ENCODE measurements at regions of chr9 and their contacts with region 1.

Region 1: DNA sequence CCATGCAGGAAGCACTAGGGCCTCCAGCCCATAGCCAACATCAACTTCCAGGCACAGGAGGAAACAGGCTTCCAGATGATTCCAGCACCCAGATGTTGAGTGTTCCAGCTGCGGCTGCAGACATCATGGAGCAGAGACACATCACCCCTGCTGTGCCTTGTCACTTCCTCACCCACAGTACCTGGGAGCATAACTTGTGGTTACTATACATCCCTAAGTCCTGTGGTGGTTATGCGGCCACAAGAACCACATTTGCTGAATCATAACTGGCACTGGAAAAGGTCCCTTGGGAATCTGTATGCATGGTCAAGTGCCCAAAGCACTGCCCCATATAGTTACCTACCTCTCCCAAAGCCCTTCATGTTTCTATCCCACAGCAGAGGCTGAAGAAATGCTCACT is 56.6 kb downstream of the WHRN start:
- DNase-seq: no peak
- H3K27ac ChIP-seq: no peak overlapping the region
- CTCF ChIP-seq: no peak

Region 2: GRCh38 chr9:113957821-113958341 is 490.8 kb before region 1 on chr9:
- CTCF ChIA-PET with region 1: no interaction called
- POLR2A ChIA-PET with region 1: no interaction called
- DNase-seq: peak; percentile 98
- H3K27ac ChIP-seq: peak overlapping the region; percentile 94
- CTCF ChIP-seq: no peak

Region 3: DNA sequence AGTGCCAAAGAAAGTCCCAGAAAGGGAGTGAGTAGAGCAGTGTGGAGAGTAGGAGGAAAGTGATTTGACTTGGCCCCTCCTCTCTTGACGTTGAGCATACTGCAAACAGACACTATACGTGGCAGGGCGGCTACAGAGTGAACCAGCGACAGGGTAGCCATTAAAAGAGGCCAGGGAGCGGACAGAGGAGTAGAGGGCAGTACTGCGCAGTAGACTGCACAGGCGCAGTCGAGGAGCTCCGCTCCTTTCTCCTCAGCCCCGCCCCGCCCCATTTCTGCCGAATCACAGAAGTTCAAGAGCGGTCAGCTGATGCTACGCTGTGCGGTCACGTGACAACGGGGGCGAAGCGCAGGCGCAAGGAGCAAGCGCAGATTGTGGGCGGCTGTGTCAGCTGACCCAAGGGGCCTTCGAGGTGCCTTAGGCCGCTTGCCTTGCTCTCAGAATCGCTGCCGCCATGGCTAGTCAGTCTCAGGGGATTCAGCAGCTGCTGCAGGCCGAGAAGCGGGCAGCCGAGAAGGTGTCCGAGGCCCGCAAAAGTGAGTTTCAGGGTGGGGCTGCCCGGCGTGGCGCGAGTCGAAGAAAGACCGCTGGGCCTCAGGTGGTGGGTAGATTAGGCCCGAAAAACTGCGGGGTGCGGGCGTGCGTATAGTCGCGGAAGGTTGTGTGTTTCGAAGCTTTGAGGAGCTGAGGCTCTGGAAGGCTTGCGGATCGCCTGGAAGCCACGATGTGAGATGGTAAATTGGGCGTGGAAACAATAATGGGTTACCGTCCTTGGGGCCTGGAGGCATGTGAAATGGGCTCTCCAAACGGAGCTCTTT is 138.9 kb after region 1 on chr9 and contains the start of gene ATP6V1G1:
- CTCF ChIA-PET with region 1: interaction called, 11 read pairs
- POLR2A ChIA-PET with region 1: no interaction called
- DNase-seq: peak; percentile 100
- H3K27ac ChIP-seq: peak within 1 kb of the TSS; percentile 72
- CTCF ChIP-seq: no peak